Transverse colon (tissue), 4 donors: ENCODE measurements at regions of chr9 and their contacts with region 1.

Region 1: DNA sequence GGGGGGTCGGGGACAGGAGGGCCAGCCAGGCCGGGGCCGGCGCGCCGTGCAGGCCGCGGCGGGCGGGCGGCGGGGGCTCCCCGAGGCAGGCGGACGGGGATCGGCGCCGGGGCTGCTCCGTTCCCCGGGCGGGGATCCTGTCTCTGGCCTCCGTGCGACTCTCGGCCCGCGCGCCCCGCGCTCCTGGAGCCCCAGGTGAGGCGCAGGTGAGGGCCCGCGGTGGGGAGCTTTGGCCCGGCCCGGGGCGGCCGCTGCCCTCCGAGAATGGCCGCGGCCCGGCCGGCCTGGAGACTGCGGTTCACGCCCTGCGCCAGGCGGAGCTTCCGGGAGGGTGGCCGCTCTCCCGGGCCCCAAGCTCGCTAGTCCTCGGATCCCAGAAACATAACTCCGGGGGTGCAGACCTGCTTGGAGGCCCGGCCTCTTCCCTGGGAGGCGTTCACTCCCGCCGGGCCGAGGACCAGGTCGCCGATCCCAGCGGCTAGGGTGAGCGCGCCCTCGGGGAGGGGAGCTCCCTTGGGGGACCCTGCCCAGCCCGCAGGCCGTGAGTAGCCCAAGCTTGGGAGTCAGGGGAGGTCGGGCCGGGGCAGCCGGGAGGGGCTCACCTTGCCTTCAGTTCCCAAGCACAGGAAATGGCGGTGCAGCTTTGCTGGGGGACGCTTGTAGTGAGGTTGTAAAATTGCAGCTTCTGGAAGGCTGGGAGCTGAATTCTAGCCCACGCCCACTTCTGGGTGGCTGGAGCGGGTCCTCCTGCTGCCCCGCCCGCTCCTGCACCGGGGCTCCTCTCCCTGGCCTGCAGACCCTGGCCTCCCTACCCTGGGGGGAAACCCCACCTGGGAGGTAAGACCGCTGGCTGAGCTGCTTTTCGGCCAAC is 724 bp downstream of the PPP1R26 start:
- DNase-seq: peak; percentile 61
- H3K4me3 ChIP-seq: peak overlapping the region; percentile 41 to 86 (median 81)
- H3K27ac ChIP-seq: peak overlapping the region; percentile 69 to 87 (median 84)
- H3K4me1 ChIP-seq: peaks cover 3 to 22% (median 12%) of the 10 kb centered on the region in 4 donors
- H3K27me3 ChIP-seq: no peaks in the 10 kb centered on the region
- CTCF ChIP-seq: no peak
- EP300 ChIP-seq: no peak
- POLR2A ChIP-seq: peak; percentile 39

Region 2: DNA sequence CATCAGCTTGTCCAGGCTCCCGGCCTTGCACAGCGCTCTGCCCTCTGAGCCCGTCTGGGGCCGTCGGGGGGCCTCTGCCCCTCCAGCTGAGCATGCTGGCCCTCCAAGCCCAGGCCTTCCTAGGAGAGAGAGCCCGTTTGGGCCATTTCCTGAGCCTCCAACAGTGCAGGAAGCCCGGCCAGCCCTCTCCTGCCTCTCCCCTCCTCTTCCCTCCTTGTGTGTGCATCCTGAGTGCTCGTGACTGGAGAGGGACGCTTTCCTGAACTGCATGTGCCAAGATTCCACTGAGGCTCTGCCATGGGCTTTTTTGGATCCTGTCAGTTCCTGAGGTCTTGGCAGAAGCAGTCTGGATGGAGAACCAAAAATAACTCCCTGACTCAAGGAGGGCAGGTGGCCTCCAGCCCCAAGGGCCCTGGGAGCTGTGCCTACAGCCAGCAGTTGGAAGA is 377.3 kb before region 1 on chr9:
- in situ Hi-C with region 1: no loop called
- intact Hi-C with region 1: loop called (anchors 5 kb)
- DNase-seq: no peak
- H3K4me3 ChIP-seq: no peak overlapping the region
- H3K27ac ChIP-seq: no peak overlapping the region
- H3K4me1 ChIP-seq: no peaks in the 10 kb centered on the region
- H3K27me3 ChIP-seq: peaks cover 4% of the 10 kb centered on the region
- CTCF ChIP-seq: no peak
- EP300 ChIP-seq: no peak
- POLR2A ChIP-seq: no peak

Region 3: DNA sequence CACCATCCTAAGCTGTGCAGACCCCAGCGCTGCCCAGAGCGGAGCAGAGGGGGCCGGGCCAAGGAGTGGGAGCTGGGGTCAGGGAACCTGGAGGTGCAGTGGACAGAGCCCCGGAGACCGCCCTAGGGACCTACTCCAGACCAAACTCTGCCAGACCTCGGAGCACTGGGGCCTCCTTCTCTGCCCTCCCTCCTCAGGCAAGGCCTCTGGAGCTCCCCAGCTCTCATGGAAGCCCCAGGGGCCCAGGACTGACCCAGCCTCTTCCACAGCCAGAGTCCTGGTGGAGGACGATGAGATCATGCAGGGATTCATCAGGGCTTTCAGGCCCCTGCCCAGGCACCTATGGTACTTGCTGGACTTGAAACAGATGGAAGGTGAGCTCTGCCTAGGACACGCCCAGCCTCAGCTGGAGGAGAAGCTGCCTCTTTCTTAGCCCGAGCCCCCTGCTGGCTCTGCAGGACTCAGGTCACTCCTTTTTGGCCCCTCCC is 84.9 kb after region 1 on chr9:
- in situ Hi-C with region 1: no loop called
- intact Hi-C with region 1: no loop called
- DNase-seq: no peak
- H3K4me3 ChIP-seq: no peak overlapping the region
- H3K27ac ChIP-seq: no peak overlapping the region
- H3K4me1 ChIP-seq: no peaks in the 10 kb centered on the region
- H3K27me3 ChIP-seq: peaks cover 15% of the 10 kb centered on the region
- CTCF ChIP-seq: no peak
- EP300 ChIP-seq: no peak
- POLR2A ChIP-seq: no peak

Region 4: GRCh38 chr9:135639196-135639595 is 158.9 kb after region 1 on chr9 and contains the start of gene GLT6D1:
- in situ Hi-C with region 1: no loop called
- intact Hi-C with region 1: no loop called
- DNase-seq: no peak
- H3K4me3 ChIP-seq: no peak within 1 kb of the TSS
- H3K27ac ChIP-seq: no peak within 1 kb of the TSS
- H3K4me1 ChIP-seq: no peaks in the 10 kb centered on the region
- H3K27me3 ChIP-seq: peaks cover 34% of the 10 kb centered on the region
- CTCF ChIP-seq: no peak
- EP300 ChIP-seq: no peak
- POLR2A ChIP-seq: no peak
- total RNA-seq, gene GLT6D1: not detected